ENCODE measurements at regions of chr1 and their contacts with region 1.

Region 1: DNA sequence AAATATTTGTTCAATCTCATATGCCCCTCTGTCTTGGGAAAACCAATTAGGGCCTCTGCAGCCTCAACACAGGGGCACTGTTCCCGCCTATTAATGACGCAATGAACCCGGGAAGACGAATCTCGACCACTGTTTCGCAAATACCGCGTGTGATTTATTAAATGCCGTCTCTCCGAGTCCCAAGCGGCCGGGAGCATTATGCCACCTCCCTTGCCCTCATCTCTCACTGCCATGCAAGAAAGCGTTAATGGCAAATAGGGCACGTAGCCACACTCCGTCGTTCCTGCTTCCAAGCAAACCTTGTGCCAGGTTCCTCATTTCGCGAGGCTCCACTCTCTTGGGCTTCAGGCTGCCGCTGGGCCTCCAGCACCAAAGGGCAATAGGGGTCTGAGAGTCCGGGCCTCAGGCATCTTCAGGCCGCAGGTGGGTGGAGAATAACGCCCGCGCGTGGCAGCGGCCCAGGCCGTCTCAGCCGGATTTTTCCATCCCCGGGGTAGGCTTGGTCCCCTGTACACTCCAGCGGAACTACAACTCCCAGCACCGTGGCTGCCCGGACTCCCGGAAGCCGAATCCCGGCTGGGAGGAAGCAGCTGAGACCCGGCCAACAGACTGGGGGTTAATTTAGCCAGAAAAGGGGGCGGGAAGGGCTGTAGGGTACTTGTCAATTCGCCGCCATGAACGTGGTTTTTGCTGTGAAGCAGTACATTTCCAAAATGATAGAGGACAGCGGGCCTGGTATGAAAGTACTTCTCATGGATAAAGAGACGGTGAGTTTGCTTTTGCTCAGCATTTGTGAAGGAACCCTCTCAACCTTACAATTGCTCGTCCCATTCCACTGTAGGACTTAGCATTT is at the start of gene VPS45:
- DNase-seq: peak; percentile 69 to 82 (median 75)
- H3K4me3 ChIP-seq: peak within 1 kb of the TSS; percentile 70 to 88
- H3K4me3 Mint-ChIP-seq: peak within 1 kb of the TSS; percentile 91 to 98 (median 96)
- H3K27ac ChIP-seq: peak within 1 kb of the TSS; percentile 65
- H3K27ac Mint-ChIP-seq: peak within 1 kb of the TSS; percentile 91 to 97 (median 94)
- H3K4me1 ChIP-seq: peaks cover 30% of the 10 kb centered on the region
- H3K4me1 Mint-ChIP-seq: peaks cover 27 to 42% (median 35%) of the 10 kb centered on the region in 4 donors
- H3K27me3 ChIP-seq: no peaks in the 10 kb centered on the region
- H3K27me3 Mint-ChIP-seq: no peaks in the 10 kb centered on the region
- total RNA-seq, gene VPS45: 32.1 to 38.5 TPM

Region 2: DNA sequence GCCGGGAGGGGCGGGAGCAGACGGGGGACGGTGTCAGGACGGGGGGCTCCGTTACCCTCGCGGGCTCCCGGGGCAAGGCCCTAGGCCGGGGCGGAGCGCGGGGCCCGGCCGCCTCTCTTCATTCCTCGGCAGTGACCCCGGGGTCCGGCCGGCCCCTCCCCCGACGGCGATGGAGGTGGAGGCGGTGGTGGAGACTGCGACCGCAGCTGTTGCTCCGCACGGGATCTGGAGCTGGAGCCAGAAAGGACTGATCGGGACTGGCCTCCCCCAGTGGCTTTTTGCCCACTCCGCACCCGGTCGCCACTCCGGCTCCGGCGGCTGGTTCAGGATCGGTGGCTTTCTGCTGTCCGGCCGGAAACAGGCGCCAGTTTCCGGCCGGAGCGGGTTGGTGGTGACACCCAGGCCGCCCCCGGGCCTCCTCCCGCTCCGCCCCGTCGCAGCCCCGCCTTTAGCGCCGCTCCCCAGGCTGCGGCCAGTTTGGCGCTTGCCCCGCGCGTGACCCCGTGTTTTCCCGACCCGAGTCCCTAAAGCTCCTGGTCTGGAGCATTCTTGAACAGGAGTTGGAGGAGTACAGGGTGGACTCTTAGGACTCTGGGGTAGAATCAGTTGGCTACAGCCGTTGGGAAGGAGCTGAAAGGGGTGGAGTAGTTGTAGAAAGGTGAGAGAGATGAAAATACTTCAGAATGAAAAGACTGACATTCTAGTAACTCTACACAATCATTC is 56.9 kb before region 1 on chr1 and contains the start of gene OTUD7B:
- CTCF ChIA-PET with region 1: interaction called, 4 read pairs
- POLR2A ChIA-PET with region 1: interaction called, 4 read pairs
- intact Hi-C with region 1: loop called (anchors 1 kb)
- DNase-seq: peak; percentile 46 to 64 (median 49)
- H3K4me3 ChIP-seq: peak within 1 kb of the TSS; percentile 64 to 87
- H3K4me3 Mint-ChIP-seq: peak within 1 kb of the TSS; percentile 89 to 99 (median 96)
- H3K27ac ChIP-seq: peak within 1 kb of the TSS; percentile 63
- H3K27ac Mint-ChIP-seq: peak within 1 kb of the TSS; percentile 62 to 94 (median 91)
- H3K4me1 ChIP-seq: peaks cover 20% of the 10 kb centered on the region
- H3K4me1 Mint-ChIP-seq: peaks cover 22 to 36% (median 26%) of the 10 kb centered on the region in 4 donors
- H3K27me3 ChIP-seq: no peaks in the 10 kb centered on the region
- H3K27me3 Mint-ChIP-seq: no peaks in the 10 kb centered on the region
- total RNA-seq, gene OTUD7B: 15.3 to 17.6 TPM

Region 3: DNA sequence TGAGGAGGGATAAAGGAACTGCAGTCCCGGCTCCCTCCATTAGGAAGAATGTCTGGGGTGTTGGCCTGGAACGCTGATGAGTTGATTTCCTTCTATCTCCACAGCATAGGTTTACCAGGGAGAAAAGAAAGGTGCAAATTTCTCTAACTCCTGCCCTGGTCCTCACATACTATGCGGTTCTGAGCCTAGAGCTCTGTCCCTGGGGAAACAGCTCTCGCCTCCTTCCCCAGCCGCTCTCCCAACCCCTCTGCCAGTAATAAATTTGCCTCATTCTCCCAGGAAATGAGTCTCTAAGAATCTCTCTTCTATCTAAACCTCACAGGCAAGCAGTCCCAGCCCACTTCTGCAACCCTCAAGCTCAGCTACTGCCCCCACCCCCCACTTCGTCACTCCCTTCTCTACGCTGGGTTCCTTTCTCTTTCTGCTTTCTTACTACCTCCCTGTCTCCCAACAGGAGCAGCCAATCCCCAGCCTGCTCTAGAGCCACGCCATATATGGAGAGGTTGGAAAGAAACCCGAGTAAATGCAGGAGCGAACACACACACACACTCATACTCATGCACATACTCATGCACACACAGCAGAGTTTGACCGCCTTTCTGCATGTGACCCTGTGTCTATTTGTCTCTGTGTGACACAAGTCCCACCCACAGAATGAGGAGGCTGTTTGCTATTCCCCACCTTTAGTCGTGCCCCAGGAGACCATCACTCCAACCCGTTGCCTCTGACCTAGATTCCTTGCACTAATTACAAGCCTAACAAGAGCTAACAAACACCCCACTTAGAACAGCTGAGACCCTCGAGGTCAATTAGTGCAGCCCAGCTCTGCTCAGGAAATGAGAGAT is 95.7 kb after region 1 on chr1:
- CTCF ChIA-PET with region 1: interaction called, 574 read pairs
- POLR2A ChIA-PET with region 1: interaction called, 130 read pairs
- intact Hi-C with region 1: no loop called
- DNase-seq: no peak
- H3K4me3 ChIP-seq: no peak overlapping the region
- H3K4me3 Mint-ChIP-seq: peak overlapping the region in 5 of 8 donors; percentile 0 to 61 (median 34)
- H3K27ac ChIP-seq: no peak overlapping the region
- H3K27ac Mint-ChIP-seq: peak overlapping the region in 5 of 7 donors; percentile 34 to 83 (median 53)
- H3K4me1 ChIP-seq: peaks cover 40% of the 10 kb centered on the region
- H3K4me1 Mint-ChIP-seq: peaks cover 34 to 52% (median 42%) of the 10 kb centered on the region in 4 donors
- H3K27me3 ChIP-seq: no peaks in the 10 kb centered on the region
- H3K27me3 Mint-ChIP-seq: no peaks in the 10 kb centered on the region

Measured in CD4-positive, alpha-beta memory T cell (primary cell).